CD4-positive, alpha-beta memory T cell (primary cell): ENCODE measurements at regions of chr22 and their contacts with region 1.

Region 1: DNA sequence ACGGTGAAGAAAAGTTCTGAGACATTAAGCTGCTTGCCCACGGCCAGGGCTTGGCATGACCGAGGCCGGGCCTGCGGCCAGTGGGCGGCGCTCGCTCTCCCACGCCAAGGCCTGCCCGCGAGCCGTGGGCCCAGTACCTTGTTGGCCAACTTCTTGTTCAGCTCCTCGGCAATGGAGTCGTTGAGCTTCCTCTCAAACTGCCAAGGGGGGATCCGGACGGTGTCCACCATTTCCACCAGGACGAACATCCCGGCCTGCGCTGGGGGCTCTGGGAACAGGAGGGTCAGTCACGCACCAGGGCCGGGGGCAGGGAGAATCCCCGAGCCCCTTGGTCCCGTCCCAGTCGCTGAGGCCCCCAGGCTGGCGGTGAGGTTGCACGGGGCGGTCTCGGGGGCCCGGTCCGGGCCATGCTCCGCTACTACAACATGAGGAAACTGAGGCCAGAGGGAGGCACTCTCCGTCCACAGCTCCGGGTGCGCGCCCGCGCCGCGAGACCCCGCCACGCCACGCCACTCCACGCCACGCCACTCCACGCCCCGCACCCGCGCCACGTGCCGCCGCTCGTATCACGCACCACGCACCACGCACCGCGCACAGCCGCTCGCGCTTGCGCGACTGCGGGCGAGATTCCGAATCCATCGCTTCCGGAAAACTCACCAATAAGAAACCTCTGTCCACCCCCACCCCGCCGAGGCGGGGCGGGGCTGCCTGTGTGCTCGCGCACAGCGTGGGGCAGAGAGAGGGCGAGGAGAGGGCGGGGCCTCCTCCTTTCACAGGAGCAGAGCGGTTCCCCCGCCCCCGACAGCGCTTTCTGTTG is at the start of gene POLR3H:
- DNase-seq: peak; percentile 95 to 97 (median 95)
- H3K4me3 ChIP-seq: peak within 1 kb of the TSS; percentile 78
- H3K4me3 Mint-ChIP-seq: peak within 1 kb of the TSS; percentile 95 to 98 (median 98)
- H3K27ac ChIP-seq: peak within 1 kb of the TSS; percentile 77
- H3K27ac Mint-ChIP-seq: peak within 1 kb of the TSS; percentile 90 to 98 (median 96)
- H3K4me1 ChIP-seq: peaks cover 26% of the 10 kb centered on the region
- H3K4me1 Mint-ChIP-seq: peaks cover 29 to 48% (median 41%) of the 10 kb centered on the region in 4 donors
- H3K27me3 ChIP-seq: no peaks in the 10 kb centered on the region
- H3K27me3 Mint-ChIP-seq: no peaks in the 10 kb centered on the region
- total RNA-seq, gene POLR3H: 43.6 to 43.7 TPM

Region 2: DNA sequence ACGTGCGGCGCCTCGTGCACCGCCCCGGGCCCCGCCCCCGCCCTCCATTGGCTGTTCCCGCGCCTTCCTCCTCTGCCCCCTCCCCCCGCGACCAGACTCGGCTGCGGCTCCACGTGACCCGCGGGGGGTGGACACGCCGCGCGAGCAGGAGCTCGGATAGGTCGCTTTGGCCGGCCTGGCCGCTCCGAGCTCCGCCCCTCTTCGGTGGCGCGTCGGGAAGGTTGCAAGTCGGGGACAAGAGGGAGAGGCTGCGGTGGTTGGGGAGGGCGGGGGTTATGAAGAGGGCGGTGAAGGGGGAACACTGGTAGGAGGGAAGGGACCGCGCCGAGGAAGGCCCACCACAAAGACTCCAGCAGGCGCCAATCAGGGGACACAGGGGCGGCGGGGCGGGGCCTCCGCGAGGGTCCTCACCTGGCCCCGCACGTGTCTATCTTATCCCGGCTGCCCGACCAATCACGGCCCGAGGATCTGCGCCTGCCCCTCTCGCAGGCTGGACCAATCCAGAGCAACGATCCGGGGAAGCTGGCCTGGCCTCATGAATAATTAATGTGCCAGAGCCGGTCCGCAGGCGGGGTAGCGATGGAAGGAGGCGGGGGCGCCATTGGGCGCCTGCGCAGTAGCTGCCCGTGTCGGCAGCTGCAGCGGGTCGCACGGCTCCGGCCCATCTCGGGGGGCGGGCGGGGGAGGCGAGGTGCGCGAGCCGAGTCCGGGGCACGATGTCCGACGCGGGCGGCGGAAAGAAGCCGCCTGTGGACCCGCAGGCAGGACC is 162.5 kb before region 1 on chr22 and contains the start of gene TEF:
- CTCF ChIA-PET with region 1: interaction called, 3 read pairs
- POLR2A ChIA-PET with region 1: interaction called, 8 read pairs
- intact Hi-C with region 1: loop called (anchors 1 kb)
- DNase-seq: peak; percentile 99
- H3K4me3 ChIP-seq: peak within 1 kb of the TSS; percentile 65 to 88
- H3K4me3 Mint-ChIP-seq: peak within 1 kb of the TSS; percentile 90 to 97 (median 94)
- H3K27ac ChIP-seq: peak within 1 kb of the TSS; percentile 87
- H3K27ac Mint-ChIP-seq: peak within 1 kb of the TSS; percentile 98 to 99 (median 98)
- H3K4me1 ChIP-seq: peaks cover 18% of the 10 kb centered on the region
- H3K4me1 Mint-ChIP-seq: peaks cover 12 to 36% (median 22%) of the 10 kb centered on the region in 4 donors
- H3K27me3 ChIP-seq: no peaks in the 10 kb centered on the region
- H3K27me3 Mint-ChIP-seq: no peaks in the 10 kb centered on the region
- total RNA-seq, gene TEF: 6.5 to 8.8 TPM

Region 3: GRCh38 chr22:41468381-41469217 is 75.5 kb before region 1 on chr22 and contains the starts of genes ACO2 and PHF5A:
- CTCF ChIA-PET with region 1: no interaction called
- POLR2A ChIA-PET with region 1: interaction called, 5 read pairs
- intact Hi-C with region 1: loop called (anchors 1 kb)
- DNase-seq: peak; percentile 98
- H3K4me3 ChIP-seq: peak within 1 kb of the TSS; percentile 67 to 90
- H3K4me3 Mint-ChIP-seq: peak within 1 kb of the TSS; percentile 86 to 95 (median 92)
- H3K27ac ChIP-seq: peak within 1 kb of the TSS; percentile 89
- H3K27ac Mint-ChIP-seq: peak within 1 kb of the TSS; percentile 96 to 100 (median 99)
- H3K4me1 ChIP-seq: peaks cover 28% of the 10 kb centered on the region
- H3K4me1 Mint-ChIP-seq: peaks cover 29 to 56% (median 44%) of the 10 kb centered on the region in 4 donors
- H3K27me3 ChIP-seq: no peaks in the 10 kb centered on the region
- H3K27me3 Mint-ChIP-seq: no peaks in the 10 kb centered on the region
- total RNA-seq, gene ACO2: 64.8 to 65.0 TPM
- total RNA-seq, gene PHF5A: 37.7 to 39.2 TPM

Region 4: DNA sequence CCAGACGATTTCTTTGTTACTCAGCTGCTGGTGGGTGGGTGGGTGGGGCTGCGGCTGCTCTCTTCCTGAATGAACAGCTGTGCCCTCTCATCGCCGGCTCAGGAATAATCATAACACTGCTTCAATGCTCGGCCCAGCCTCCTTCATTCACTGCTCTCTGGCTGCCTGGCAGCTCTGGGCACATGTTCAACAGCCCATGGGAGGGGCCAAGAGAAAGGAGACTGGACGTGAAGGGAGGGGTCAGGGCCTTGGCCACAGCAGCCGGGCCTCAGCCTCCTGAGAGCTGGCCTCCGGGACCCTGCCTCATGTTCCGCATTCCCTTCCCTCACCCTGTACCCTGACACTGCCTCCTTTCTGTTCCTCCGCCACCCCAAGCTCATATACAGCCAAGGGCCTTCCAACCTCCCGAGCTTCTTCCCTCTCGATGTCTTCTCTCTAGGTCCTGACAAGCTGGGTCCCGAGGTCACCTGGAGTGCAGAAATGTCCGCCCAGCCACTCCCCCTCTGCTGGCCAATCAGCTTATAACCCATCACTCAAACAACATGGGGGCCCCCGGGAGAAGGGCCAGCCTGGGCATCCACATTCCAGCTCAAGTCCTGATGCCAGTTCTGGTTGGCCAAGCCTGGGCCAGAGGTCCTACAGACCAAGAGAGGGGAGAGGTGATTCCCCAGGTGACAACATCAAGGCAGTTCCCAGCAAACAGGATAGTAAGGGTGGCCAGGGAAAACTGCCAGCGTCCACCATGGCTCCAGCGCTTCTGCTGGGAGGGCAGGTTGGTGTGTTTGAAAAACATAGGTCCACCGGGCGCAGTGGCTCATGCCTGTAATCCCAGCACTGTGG is 13.6 kb after region 1 on chr22:
- CTCF ChIA-PET with region 1: no interaction called
- POLR2A ChIA-PET with region 1: no interaction called
- intact Hi-C with region 1: no loop called
- DNase-seq: no peak
- H3K4me3 ChIP-seq: no peak overlapping the region
- H3K4me3 Mint-ChIP-seq: no peak overlapping the region
- H3K27ac ChIP-seq: no peak overlapping the region
- H3K27ac Mint-ChIP-seq: no peak overlapping the region
- H3K4me1 ChIP-seq: no peaks in the 10 kb centered on the region
- H3K4me1 Mint-ChIP-seq: no peaks in the 10 kb centered on the region
- H3K27me3 ChIP-seq: no peaks in the 10 kb centered on the region
- H3K27me3 Mint-ChIP-seq: peaks cover 13 to 24% of the 10 kb centered on the region in 2 donors

Region 5: DNA sequence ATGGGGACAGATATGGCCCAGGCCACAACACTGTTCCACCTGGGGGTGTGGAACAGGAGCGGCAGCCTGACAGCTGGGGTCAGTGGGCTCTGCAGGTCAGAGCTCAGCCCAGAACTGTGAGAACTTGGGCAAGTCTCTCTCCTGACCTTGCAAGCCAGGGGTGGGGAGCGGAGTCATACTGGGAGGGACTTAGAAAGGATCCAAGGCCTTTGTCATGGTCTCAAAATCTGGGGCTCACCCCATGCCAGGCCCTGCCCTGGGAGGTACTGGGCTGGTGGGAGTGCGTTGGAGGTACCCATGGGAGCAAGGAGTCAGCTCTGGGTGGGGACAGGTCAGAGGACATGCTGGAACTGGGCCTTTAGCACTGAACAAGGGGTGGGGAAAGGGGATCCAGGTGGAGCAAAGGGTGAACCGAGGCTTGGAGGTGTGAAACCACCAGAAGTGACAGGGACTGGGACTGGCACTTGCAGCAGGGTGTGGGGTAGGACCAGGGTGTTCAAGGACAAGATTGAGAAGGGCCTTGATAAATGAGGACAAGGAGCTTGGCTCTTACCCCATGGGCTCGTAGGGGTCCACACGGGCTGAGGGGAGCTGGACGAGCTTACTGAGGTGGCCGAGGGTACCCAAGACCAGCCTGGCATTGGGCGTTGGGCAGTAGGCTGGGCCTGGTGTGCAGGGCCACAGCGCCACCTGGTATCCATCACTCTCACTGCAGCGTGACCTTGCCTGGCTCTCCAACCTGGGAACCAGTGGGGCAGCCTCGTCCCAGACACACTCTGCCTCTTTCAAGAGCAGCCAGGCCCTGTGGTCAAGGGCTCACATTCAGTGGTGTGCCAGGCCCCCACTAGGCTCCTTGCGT is 52.9 kb after region 1 on chr22:
- CTCF ChIA-PET with region 1: interaction called, 10 read pairs
- POLR2A ChIA-PET with region 1: interaction called, 3 read pairs
- intact Hi-C with region 1: no loop called
- DNase-seq: peak in 3 of 5 donors; percentile 14 to 31 (median 19)
- H3K4me3 ChIP-seq: no peak overlapping the region
- H3K4me3 Mint-ChIP-seq: no peak overlapping the region
- H3K27ac ChIP-seq: no peak overlapping the region
- H3K27ac Mint-ChIP-seq: peak overlapping the region in 1 of 7 donors; percentile 37
- H3K4me1 ChIP-seq: no peaks in the 10 kb centered on the region
- H3K4me1 Mint-ChIP-seq: no peaks in the 10 kb centered on the region
- H3K27me3 ChIP-seq: no peaks in the 10 kb centered on the region
- H3K27me3 Mint-ChIP-seq: no peaks in the 10 kb centered on the region